Dorsolateral prefrontal cortex (tissue), 120 donors: ENCODE measurements at regions of chr20 and their contacts with region 1.

Region 1: GRCh38 chr20:4592316-4593148 is 129.2 kb upstream of the PRND start:
- DNase-seq: peak in 3 of 10 donors; percentile 50 to 81 (median 56)
- H3K4me3 ChIP-seq: peak overlapping the region; percentile 26 to 69 (median 50)
- H3K27ac ChIP-seq: no peak overlapping the region
- H3K27me3 ChIP-seq: no peaks in the 10 kb centered on the region
- CTCF ChIP-seq: peak; percentile 68 to 99 (median 94)

Region 2: DNA sequence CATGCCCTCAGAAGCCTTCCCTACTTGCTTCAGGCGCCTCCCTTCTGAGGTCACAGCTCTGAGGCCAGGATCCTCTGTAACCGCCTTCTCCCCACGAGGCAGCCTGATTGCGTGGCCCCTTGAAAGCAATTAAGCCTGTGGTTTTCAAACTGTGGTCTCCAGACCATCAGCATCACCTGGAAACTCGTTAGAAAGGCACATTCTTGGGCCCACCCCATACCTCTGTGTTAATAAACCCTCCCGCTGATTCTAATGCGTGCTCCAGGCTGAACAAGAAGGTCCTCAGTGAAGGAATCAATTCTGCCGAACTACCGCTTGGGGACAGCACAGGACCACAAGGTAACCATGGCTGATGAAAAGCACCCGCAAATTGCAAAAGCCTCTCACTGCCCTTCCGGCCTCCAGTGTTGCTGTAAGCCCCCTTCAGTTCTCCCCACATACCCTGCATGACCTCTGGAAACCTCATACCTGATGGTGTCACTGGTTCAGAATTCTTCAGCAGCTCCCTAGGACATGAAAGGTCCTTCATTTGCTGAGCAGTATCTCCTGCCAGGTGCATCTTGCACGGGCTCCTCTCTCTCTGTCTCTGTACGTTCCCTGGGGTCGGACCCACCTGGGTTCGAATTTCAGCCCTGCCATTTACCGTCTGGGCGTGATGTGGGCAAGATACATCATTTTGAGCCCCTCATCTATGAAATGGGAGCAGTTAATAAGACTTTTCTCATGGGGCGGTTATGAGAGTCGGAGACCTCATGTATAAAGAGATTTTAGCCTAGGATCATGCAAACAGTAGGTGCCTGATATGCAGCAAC is 483.8 kb before region 1 on chr20:
- intact Hi-C with region 1: loop called (anchors 5 kb)
- DNase-seq: peak in 9 of 10 donors; percentile 50 to 80 (median 72)
- H3K4me3 ChIP-seq: peak overlapping the region in 3 of 59 donors; percentile 9 to 31 (median 30)
- H3K27ac ChIP-seq: peak overlapping the region in 2 of 59 donors; percentile 7 to 13
- H3K27me3 ChIP-seq: no peaks in the 10 kb centered on the region
- CTCF ChIP-seq: peak; percentile 76 to 99 (median 95)

Region 3: DNA sequence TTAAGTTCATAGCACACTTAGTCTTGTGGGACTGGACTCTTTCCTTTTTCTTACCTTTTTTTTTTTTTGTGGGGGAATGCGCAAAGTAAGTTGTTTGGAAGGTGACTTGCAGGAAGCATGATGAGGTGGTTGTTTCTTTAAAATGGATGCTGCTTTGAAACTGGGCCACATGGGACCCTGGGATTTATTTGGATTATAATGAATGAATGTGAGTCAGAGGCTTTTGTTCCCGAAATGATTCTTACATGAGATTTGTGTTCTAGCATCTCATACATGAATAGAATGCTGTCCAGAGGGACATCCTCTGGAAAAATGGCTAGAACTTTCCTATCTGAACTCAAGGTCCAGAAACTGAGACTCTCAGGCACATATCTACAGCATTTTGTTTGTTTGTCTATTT is 340.5 kb before region 1 on chr20:
- intact Hi-C with region 1: loop called in 1 of 2 experiments (anchors 5 kb)
- DNase-seq: no peak
- H3K4me3 ChIP-seq: no peak overlapping the region
- H3K27ac ChIP-seq: no peak overlapping the region
- H3K27me3 ChIP-seq: peaks cover 0 to 42% (median 20%) of the 10 kb centered on the region in 45 donors
- CTCF ChIP-seq: no peak